Naive thymus-derived CD4-positive, alpha-beta T cell (primary cell): ENCODE measurements at regions of chr12 and their contacts with region 1.

Region 1: DNA sequence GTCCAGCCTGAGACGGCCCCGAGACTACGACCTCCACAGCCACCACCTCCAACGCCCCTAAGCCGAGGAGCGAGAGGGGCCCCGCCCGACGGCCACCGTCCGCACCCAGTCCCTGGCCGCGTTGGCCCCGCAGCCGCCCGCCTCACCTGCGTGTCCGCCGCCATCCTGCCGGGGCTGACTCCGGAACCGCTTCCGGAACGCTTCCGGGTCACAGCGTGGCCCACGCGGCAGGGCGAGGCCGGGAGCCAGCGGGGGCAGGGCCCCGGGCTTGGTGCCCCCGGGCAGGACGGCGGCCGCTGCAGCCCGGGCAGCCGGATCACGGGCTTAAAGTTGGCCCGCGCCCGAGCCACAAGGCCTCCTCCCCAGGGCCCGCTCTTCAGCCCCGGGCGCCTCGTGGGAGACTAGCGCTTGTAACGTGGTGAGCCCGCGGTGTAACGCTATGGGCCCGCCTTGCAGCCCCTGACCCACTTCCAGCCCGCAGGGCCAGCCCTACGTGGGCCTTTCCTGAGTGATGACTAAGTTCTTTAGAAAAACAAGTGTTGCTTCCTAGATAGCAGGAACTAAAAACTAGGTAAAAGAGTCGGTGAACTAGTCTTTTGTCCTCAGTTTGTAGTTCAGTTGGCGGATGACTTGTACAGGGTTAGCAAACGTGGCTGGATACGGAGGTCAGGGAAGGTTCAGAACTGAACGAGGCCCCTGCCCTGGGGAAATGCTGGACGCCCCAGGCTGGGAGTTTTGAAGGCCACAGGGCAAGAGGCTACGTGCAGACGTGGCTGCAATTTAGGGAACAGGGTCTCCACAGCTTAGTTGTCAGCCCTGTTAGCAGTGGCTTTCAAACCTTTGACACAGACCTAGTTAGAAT is at the start of gene GCN1:
- DNase-seq: peak; percentile 77 to 97 (median 89)
- ATAC-seq: peak; percentile 93
- H3K4me3 ChIP-seq: peak within 1 kb of the TSS; percentile 96
- H3K4me3 Mint-ChIP-seq: peak within 1 kb of the TSS; percentile 82 to 96 (median 90)
- H3K27ac ChIP-seq: peak within 1 kb of the TSS; percentile 88
- H3K27ac Mint-ChIP-seq: peak within 1 kb of the TSS; percentile 87 to 95 (median 93)
- H3K4me1 ChIP-seq: peaks cover 20 to 26% of the 10 kb centered on the region in 2 donors
- H3K4me1 Mint-ChIP-seq: peaks cover 27 to 60% (median 44%) of the 10 kb centered on the region in 7 donors
- H3K27me3 ChIP-seq: no peaks in the 10 kb centered on the region
- H3K27me3 Mint-ChIP-seq: no peaks in the 10 kb centered on the region
- total RNA-seq, gene GCN1: 90.6 to 142 (median 132) TPM

Region 2: DNA sequence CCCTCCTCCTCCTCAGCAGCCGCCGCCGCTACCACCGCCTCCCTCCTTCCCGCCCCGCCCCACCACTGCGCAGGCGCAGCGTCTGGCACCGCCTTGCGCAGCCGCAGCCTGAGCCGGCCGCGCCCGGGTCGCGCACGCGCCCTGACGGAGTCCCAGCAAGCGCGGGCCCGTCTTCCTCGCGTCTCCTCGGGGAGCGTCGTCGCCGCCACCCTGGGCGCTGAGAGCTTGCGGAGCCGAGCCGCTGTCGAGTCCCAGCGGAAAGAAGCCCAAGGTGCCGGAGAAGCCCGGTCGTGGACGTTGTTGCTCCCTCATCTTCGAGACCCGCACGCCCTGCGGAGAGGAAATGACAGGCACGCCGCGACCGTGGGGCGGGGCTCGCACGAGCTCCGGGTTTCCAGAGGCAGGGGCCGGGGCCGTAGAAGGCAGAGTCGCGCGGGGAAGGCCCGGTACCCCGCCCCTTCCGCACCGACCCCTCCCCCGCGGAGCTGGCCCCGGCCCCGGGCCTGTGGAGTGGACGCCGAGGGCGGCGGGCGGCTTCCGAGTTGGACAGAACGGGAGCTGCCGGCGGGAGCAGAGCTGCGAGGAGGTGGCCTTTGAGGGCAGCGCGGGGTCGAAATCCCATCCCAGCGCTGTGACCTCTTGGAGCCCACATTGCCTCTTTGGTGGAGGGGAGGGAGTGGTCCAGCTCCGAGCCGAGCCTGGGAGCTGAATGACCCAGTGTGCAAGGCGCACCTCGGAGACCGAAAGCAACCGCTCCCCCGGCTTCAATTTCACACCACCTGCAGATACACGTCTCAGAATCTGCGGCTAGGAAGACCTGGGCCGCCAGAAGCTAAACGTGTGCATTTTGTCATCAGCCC is 77.7 kb before region 1 on chr12:
- CTCF ChIA-PET with region 1: no interaction called
- POLR2A ChIA-PET with region 1: interaction called, 47 read pairs
- intact Hi-C with region 1: loop called (anchors 1 kb)
- DNase-seq: peak; percentile 95 to 100 (median 98)
- ATAC-seq: peak; percentile 91
- H3K4me3 ChIP-seq: peak overlapping the region; percentile 82
- H3K4me3 Mint-ChIP-seq: peak overlapping the region; percentile 78 to 95 (median 90)
- H3K27ac ChIP-seq: peak overlapping the region; percentile 84
- H3K27ac Mint-ChIP-seq: peak overlapping the region; percentile 80 to 97 (median 90)
- H3K4me1 ChIP-seq: peaks cover 46 to 48% of the 10 kb centered on the region in 2 donors
- H3K4me1 Mint-ChIP-seq: peaks cover 64 to 86% (median 80%) of the 10 kb centered on the region in 7 donors
- H3K27me3 ChIP-seq: no peaks in the 10 kb centered on the region
- H3K27me3 Mint-ChIP-seq: no peaks in the 10 kb centered on the region

Region 3: DNA sequence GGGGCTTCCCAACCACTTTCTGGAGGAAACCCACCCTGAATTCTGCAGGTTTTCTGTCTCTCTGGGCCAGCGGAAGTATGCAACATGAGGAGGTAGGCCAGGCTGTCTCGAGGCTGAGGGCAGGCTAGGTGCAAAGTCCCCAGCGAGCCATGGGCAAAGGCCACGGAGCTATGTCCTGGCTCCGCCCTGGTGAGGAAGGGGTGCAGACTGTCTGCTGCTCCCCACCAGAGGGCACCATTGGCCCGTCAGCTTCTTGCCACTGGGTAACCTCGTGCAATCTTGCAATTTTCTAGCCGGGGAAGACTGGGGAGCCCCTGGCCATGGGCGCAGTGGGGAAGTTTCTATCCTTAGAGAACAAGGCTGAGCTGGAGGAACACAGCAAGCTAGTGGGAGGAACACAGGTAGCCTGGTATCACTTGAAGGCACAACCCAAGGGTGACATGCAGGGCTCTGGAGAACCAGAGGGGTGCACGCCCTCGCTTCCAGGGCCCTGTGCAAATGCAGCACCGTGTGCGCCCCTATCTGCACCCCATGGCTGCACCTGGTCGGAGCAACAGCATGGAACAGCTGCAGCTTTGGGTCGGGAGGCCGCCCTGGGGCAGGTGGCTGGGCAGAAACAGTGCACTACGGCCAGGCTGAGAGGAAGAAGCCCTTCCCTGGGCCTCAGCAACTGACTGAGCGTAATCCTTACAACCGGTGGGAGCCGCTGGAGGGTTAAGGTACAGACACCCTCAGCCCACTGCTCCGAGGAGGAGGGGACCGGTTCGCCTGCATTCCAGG is 33.7 kb after region 1 on chr12:
- CTCF ChIA-PET with region 1: interaction called, 4 read pairs
- POLR2A ChIA-PET with region 1: interaction called, 62 read pairs
- intact Hi-C with region 1: no loop called
- DNase-seq: peak; percentile 77 to 90 (median 86)
- ATAC-seq: peak; percentile 86
- H3K4me3 ChIP-seq: peak overlapping the region; percentile 21
- H3K4me3 Mint-ChIP-seq: peak overlapping the region; percentile 72 to 89 (median 78)
- H3K27ac ChIP-seq: peak overlapping the region; percentile 61
- H3K27ac Mint-ChIP-seq: peak overlapping the region in 8 of 9 donors; percentile 74 to 94 (median 87)
- H3K4me1 ChIP-seq: peaks cover 57 to 72% of the 10 kb centered on the region in 2 donors
- H3K4me1 Mint-ChIP-seq: peaks cover 58 to 89% (median 82%) of the 10 kb centered on the region in 7 donors
- H3K27me3 ChIP-seq: no peaks in the 10 kb centered on the region
- H3K27me3 Mint-ChIP-seq: no peaks in the 10 kb centered on the region

Region 4: DNA sequence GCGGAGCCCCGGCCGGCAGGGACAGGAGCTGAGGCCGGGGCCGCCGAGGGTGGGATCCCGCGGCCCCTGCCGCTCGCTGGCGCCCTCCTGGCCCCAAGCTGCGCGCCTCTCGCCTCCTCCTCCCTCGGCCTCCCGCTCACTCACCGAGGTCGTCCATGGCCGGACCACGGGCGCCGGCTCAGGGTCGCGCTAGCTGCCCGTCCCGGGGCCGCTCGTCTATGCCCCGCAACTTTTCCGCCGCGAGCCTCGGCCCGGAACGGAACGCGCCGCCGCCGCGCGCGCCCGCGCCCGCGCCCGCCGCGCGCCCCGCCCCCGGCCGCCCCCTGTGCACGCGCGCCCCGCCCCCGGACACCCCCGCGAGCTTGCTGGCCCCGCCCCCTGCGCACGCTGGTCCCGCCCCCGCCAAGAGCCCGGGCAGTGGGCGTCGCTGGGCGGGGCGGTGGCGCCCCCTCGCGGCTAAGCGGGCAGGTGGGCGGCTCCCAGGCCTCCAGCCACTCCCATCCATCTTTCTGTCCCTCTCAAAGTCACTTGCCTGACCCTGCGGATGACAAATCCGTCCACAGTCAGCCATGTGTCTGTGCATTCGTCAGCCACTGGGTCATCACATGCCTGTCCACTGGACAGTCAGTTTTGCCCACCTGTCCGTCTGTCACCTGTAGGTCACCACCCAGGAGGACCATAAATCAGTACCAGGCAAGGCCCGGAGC is 70.9 kb after region 1 on chr12 and contains the start of gene PXN:
- CTCF ChIA-PET with region 1: interaction called, 4 read pairs
- POLR2A ChIA-PET with region 1: interaction called, 63 read pairs
- intact Hi-C with region 1: no loop called
- DNase-seq: peak; percentile 83 to 98 (median 91)
- ATAC-seq: peak; percentile 99
- H3K4me3 ChIP-seq: peak within 1 kb of the TSS; percentile 76
- H3K4me3 Mint-ChIP-seq: peak within 1 kb of the TSS; percentile 89 to 100 (median 93)
- H3K27ac ChIP-seq: peak within 1 kb of the TSS; percentile 91
- H3K27ac Mint-ChIP-seq: peak within 1 kb of the TSS; percentile 86 to 97 (median 93)
- H3K4me1 ChIP-seq: peaks cover 29 to 40% of the 10 kb centered on the region in 2 donors
- H3K4me1 Mint-ChIP-seq: peaks cover 17 to 46% (median 33%) of the 10 kb centered on the region in 7 donors
- H3K27me3 ChIP-seq: no peaks in the 10 kb centered on the region
- H3K27me3 Mint-ChIP-seq: no peaks in the 10 kb centered on the region
- total RNA-seq, gene PXN: 103 to 202 (median 158) TPM

Region 5: GRCh38 chr12:121802846-121803630 is 1608.3 kb after region 1 on chr12:
- CTCF ChIA-PET with region 1: no interaction called
- POLR2A ChIA-PET with region 1: interaction called, 15 read pairs
- intact Hi-C with region 1: no loop called
- DNase-seq: peak; percentile 84 to 94 (median 92)
- ATAC-seq: peak; percentile 65
- H3K4me3 ChIP-seq: peak overlapping the region; percentile 94
- H3K4me3 Mint-ChIP-seq: peak overlapping the region; percentile 89 to 99 (median 96)
- H3K27ac ChIP-seq: peak overlapping the region; percentile 96
- H3K27ac Mint-ChIP-seq: peak overlapping the region; percentile 98 to 100 (median 99)
- H3K4me1 ChIP-seq: peaks cover 21 to 28% of the 10 kb centered on the region in 2 donors
- H3K4me1 Mint-ChIP-seq: peaks cover 25 to 37% (median 29%) of the 10 kb centered on the region in 7 donors
- H3K27me3 ChIP-seq: no peaks in the 10 kb centered on the region
- H3K27me3 Mint-ChIP-seq: no peaks in the 10 kb centered on the region